H1 (cell line): ENCODE measurements at regions of chr11 and their contacts with region 1.

Region 1: DNA sequence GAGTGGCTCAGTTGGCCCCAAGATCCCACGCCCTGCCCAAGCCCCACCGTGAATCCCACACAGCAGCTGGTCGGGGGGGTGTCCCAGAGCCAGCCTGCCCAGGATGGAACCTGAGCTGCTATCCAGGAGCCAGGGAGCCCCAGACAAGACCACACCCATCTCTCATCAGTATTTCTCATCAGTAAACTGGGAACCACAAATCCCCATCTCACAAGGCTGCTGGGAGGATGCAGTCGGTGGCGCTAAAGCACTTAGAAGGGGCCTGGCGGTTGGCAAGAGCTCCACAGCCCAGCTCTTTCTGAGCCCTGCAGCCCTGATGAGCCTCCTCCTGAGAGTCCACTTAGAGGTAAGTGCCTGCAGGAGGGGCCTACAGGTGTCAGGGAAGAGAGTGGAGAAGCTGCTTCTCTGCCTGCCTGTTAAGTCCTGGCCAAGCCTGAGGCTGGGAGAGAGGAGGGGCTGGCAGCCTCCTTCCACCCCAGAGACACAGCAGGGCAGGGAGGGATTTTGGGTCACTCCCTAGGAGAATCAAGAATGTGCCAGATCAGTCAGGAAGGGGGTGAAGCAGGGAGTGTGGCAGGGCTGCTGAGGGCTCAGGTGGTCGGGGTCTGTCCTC is 6.1 kb downstream of the FADS3 start:
- DNase-seq: peak in 1 of 2 experiments; percentile 45
- H3K4me3 ChIP-seq: no peak overlapping the region
- H3K27ac ChIP-seq: no peak overlapping the region
- H3K4me1 ChIP-seq: peaks cover 0 to 15% (median 6%) of the 10 kb centered on the region in 4 experiments; a peak in 5 of 7 replicates
- H3K27me3 ChIP-seq: no peaks in the 10 kb centered on the region
- CTCF ChIP-seq: no peak
- EP300 ChIP-seq: no peak
- POLR2A ChIP-seq: no peak
- RAD21 ChIP-seq: 0 out of 4 replicates have a peak, but pooled peaks of 1 of the 2 experiments have one; percentile 2

Region 2: GRCh38 chr11:61816736-61817455 is 68.4 kb before region 1 on chr11 and contains the start of gene FADS1:
- CTCF ChIA-PET with region 1: no interaction called
- POLR2A ChIA-PET with region 1: interaction called, 15 read pairs
- DNase-seq: peak; percentile 89 to 92
- H3K4me3 ChIP-seq: peak within 1 kb of the TSS; percentile 74 to 92 (median 76)
- H3K27ac ChIP-seq: peak within 1 kb of the TSS; percentile 85
- H3K4me1 ChIP-seq: peaks cover 2 to 9% (median 5%) of the 10 kb centered on the region in 4 experiments; a peak in 5 of 7 replicates
- H3K27me3 ChIP-seq: no peaks in the 10 kb centered on the region
- CTCF ChIP-seq: peak; percentile 51 to 62 (median 57)
- EP300 ChIP-seq: 0 out of 3 replicates have a peak, but pooled peaks of 1 of the 2 experiments have one; percentile 21
- POLR2A ChIP-seq: peak in 1 of 2 experiments; percentile 17; a peak in 2 of 3 replicates
- RAD21 ChIP-seq: peak in 1 of 2 experiments; percentile 23; a peak in 2 of 4 replicates
- total RNA-seq, gene FADS1: 115 and 116 TPM in 2 replicates

Region 3: DNA sequence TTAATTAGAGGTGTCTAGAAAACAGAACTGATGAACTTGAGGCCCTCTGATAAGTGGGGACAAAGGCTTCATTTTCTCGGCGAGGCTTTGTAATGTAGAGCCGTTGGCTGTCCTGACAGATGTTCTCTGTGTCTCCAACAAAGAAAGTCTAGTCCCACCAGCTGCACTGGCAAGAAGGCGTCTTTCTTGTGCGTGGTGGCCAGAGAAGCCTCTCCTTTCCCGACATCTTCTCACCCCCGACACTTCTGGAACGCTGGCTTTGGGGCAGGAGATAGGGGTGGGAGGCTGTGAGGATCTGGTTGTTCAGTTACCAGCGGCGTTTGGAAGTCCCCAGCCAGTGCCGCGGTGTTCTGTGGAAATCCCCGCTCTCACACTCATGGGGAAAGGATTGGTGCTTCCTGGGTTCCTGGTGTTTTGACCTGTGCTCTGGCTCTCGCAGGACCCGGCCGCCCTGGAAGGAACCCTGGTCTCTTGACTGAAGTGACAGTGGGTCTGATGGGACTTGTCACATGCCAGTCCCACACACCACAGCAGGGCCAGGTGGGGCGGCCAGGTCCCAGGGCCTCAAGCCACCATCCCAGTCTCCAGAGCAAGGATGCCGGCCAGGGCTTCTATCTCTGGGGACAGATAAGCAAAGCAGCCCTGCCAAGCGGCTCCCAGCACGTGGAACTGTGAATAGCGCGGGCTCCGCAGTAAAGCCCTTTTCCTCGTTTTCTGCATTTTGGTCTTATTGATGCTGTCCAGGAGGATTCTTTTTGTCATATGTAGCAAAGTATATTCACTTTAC is 34.0 kb before region 1 on chr11:
- CTCF ChIA-PET with region 1: no interaction called
- POLR2A ChIA-PET with region 1: no interaction called
- DNase-seq: no peak
- H3K4me3 ChIP-seq: no peak overlapping the region
- H3K27ac ChIP-seq: no peak overlapping the region
- H3K4me1 ChIP-seq: no peaks in the 10 kb centered on the region
- H3K27me3 ChIP-seq: no peaks in the 10 kb centered on the region
- CTCF ChIP-seq: no peak
- EP300 ChIP-seq: no peak
- POLR2A ChIP-seq: no peak
- RAD21 ChIP-seq: no peak

Region 4: DNA sequence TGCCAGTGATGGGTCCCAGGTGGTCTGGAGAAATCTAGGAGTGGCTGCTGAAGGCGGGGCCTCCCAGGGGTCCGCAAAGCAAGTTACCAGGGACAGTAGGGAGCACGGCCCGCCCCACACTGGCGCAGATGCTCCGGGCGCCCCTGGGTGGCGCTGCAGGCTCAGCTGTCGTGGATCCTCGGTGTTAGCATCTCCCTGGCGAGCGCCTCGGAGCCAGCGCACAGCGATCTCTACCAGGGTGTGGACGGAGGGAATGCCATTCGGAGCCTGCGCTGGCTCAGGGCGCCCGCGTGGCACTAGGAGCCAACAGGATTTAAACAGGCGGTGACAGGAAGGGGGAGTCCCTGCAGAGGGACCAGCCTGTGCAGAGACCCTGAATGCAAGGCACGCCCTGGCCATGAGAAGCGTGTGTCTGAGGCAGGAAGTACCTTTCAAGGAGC is 14.1 kb before region 1 on chr11:
- CTCF ChIA-PET with region 1: interaction called, 39 read pairs
- POLR2A ChIA-PET with region 1: interaction called, 15 read pairs
- DNase-seq: peak; percentile 73 to 94
- H3K4me3 ChIP-seq: peak overlapping the region in 2 of 4 experiments; percentile 22 to 30; a peak in 5 of 8 replicates
- H3K27ac ChIP-seq: no peak overlapping the region
- H3K4me1 ChIP-seq: peaks cover 4 to 14% (median 4%) of the 10 kb centered on the region in 4 experiments; a peak in 6 of 7 replicates
- H3K27me3 ChIP-seq: peaks cover 0 to 11% (median 8%) of the 10 kb centered on the region in 4 experiments; a peak in 5 of 7 replicates
- CTCF ChIP-seq: peak in 2 of 3 experiments; percentile 94 to 97; a peak in 3 of 4 replicates
- EP300 ChIP-seq: 0 out of 3 replicates have a peak, but pooled peaks of 1 of the 2 experiments have one; percentile 27
- POLR2A ChIP-seq: no peak
- RAD21 ChIP-seq: peak; percentile 97 to 98